B cell (primary cell): ENCODE measurements at regions of chr2 and their contacts with region 1.

Region 1: DNA sequence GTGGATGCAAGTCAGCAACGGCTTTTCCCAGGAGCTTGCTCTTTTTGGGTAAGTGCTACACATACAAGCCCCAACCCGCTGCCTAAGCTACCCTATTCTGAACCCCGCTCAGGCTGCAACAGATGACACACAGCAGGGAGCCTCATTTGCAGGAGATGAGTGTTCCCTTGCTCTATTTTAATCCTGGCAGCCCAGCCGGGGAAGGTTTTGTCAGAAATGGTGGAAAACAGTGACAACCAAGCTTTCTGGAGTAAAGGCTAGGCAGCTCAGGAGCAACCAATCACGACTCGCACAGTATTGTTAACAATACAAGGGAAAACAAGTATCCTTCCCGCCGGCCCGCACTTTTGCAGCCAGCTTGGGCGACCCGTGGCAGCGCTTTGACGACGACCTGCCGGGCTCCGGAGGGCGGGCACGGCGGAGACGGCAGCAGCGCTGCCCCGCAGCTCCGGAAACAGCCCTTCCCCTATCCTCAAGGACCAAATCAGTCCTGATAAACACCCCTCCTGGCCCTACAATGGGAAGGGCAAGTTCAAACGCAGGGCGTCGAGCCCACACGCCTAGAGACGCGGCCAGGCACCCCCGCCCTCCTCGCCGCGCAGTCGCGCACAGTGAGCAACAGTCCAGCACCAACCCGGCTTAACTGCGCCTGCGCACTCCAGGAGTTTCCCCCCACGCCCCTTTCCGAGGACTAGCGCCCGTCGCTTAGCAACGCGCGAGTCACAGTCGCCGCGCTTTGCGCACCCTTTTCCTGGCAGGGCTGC is 74.3 kb upstream of the TSPYL6 start:
- DNase-seq: peak; percentile 93
- ATAC-seq: peak; percentile 94
- H3K4me3 ChIP-seq: peak overlapping the region; percentile 51 to 67 (median 57)
- H3K4me3 Mint-ChIP-seq: peak overlapping the region; percentile 94
- H3K27ac ChIP-seq: peak overlapping the region in 1 of 2 donors; percentile 29
- H3K27ac Mint-ChIP-seq: peak overlapping the region; percentile 91
- H3K4me1 ChIP-seq: peaks cover 21 to 23% of the 10 kb centered on the region in 2 donors
- H3K4me1 Mint-ChIP-seq: peaks cover 18% of the 10 kb centered on the region
- H3K27me3 ChIP-seq: peaks cover 0 to 23% (median 10%) of the 10 kb centered on the region in 4 experiments
- H3K27me3 Mint-ChIP-seq: peaks cover 19% of the 10 kb centered on the region
- CTCF ChIP-seq: no peak

Region 2: DNA sequence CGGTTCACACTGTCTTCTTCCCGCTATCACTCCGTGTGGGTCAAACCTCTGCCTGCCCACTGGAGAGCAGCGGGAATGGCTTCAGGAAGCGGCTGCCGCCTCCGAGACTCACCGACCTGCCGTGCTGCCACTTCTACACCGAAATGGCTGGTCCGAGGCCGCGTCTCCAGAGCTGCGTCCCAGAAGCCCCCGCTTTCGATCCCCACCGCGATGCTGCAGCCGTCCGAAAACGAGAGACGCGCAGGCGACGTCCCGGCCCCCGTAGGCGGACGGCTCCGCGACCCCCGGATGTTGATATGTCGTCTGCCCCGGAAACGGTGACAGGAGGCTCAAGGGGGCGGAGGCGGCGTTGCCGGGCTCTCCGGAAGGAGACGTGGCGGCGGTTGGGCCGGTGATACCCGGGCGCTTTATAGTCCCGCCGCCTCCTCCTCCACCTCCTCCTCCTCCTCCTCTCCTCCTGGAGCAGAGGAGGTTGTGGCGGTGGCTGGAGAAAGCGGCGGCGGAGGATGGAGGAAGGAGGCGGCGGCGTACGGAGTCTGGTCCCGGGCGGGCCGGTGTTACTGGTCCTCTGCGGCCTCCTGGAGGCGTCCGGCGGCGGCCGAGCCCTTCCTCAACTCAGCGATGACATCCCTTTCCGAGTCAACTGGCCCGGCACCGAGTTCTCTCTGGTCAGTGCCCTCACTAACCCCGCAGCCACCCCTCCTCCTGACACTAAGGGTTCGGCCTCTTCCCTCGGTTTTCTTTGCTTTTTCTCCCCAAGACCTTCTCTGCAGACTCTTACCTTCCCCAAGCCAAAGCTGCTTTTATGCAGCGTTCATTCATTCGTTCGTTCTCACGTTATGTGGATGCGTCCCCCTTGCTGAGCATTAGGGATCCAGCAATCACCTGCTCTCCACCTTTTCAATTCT is 543.4 kb before region 1 on chr2 and contains the starts of genes ASB3 and ERLEC1:
- CTCF ChIA-PET with region 1: no interaction called
- POLR2A ChIA-PET with region 1: no interaction called
- intact Hi-C with region 1: loop called (anchors 10 kb)
- DNase-seq: peak; percentile 92
- ATAC-seq: peak; percentile 92
- H3K4me3 ChIP-seq: peak within 1 kb of the TSS; percentile 77 to 98 (median 93)
- H3K4me3 Mint-ChIP-seq: peak within 1 kb of the TSS; percentile 98
- H3K27ac ChIP-seq: peak within 1 kb of the TSS; percentile 80 to 88
- H3K27ac Mint-ChIP-seq: peak within 1 kb of the TSS; percentile 92
- H3K4me1 ChIP-seq: peaks cover 29 to 33% of the 10 kb centered on the region in 2 donors
- H3K4me1 Mint-ChIP-seq: peaks cover 57% of the 10 kb centered on the region
- H3K27me3 ChIP-seq: no peaks in the 10 kb centered on the region
- H3K27me3 Mint-ChIP-seq: no peaks in the 10 kb centered on the region
- CTCF ChIP-seq: no peak
- total RNA-seq, gene ASB3: 30.7 and 38.4 TPM in 2 replicates
- total RNA-seq, gene ERLEC1: 22.9 and 24.5 TPM in 2 replicates

Region 3: GRCh38 chr2:54394392-54394791 is 64.0 kb after region 1 on chr2:
- CTCF ChIA-PET with region 1: no interaction called
- POLR2A ChIA-PET with region 1: no interaction called
- intact Hi-C with region 1: loop called (anchors 2 kb)
- DNase-seq: peak; percentile 42
- ATAC-seq: no peak
- H3K4me3 ChIP-seq: peak overlapping the region in 2 of 5 experiments; percentile 28 to 34
- H3K4me3 Mint-ChIP-seq: peak overlapping the region; percentile 71
- H3K27ac ChIP-seq: peak overlapping the region in 1 of 2 donors; percentile 8
- H3K27ac Mint-ChIP-seq: peak overlapping the region; percentile 60
- H3K4me1 ChIP-seq: peaks cover 0 to 9% of the 10 kb centered on the region in 2 donors
- H3K4me1 Mint-ChIP-seq: peaks cover 8% of the 10 kb centered on the region
- H3K27me3 ChIP-seq: no peaks in the 10 kb centered on the region
- H3K27me3 Mint-ChIP-seq: no peaks in the 10 kb centered on the region
- CTCF ChIP-seq: no peak

Region 4: GRCh38 chr2:54455563-54456361 is 125.4 kb after region 1 on chr2 and contains the start of gene SPTBN1:
- CTCF ChIA-PET with region 1: no interaction called
- POLR2A ChIA-PET with region 1: no interaction called
- intact Hi-C with region 1: loop called (anchors 1 kb)
- DNase-seq: peak; percentile 37
- ATAC-seq: peak; percentile 28
- H3K4me3 ChIP-seq: peak within 1 kb of the TSS; percentile 21 to 70 (median 51)
- H3K4me3 Mint-ChIP-seq: peak within 1 kb of the TSS; percentile 96
- H3K27ac ChIP-seq: no peak within 1 kb of the TSS
- H3K27ac Mint-ChIP-seq: no peak within 1 kb of the TSS
- H3K4me1 ChIP-seq: peaks cover 18 to 26% of the 10 kb centered on the region in 2 donors
- H3K4me1 Mint-ChIP-seq: peaks cover 18% of the 10 kb centered on the region
- H3K27me3 ChIP-seq: peaks cover 0 to 42% (median 34%) of the 10 kb centered on the region in 4 experiments
- H3K27me3 Mint-ChIP-seq: peaks cover 35% of the 10 kb centered on the region
- CTCF ChIP-seq: no peak
- total RNA-seq, gene SPTBN1: 144 and 145 TPM in 2 replicates